ENCODE measurements at regions of chr9 and their contacts with region 1.

Region 1: DNA sequence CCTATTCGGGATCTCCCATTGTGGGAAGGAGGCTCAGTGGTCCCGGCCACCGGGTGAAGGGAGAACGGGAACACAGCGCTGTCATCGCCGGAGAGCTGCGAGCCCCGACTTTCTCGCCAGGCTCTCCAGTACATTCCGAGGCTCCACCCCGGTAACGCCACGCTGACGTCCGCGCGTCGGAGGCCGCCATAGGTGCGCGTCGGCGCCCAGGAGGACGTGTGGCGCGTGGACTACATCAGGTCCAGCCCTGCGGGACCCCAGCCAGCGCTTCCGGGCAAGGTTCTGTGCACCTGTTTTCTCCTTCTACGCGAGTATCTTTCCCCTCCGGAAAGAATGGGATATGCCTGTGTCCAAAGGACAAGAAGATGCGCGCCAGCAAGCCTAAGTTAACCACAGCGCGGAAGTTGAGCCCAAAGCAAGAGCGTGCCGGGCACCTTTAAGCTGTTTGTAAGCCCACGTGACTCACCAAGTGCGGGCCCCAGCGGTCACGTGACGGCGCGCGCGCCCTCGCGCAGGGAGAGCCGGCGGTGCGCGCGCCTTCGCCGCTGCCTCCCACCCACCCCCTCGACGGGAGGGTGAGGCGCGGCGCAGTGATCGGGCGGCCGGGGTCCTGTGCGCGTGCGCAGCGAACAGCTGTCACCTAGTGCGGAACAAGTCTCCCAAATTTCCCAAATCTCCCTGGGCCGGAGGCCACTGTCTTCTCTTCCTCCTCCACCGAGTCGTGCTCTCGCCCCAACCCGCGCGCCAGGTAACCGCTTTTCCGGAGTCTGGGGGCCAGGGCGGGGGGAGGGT is at the start of gene KDM4C:
- DNase-seq: peak in 1 of 2 donors; percentile 96
- H3K4me3 ChIP-seq: peak within 1 kb of the TSS; percentile 61 to 100
- H3K27ac ChIP-seq: peak within 1 kb of the TSS; percentile 99
- H3K4me1 ChIP-seq: peaks cover 15% of the 10 kb centered on the region
- H3K27me3 ChIP-seq: no peaks in the 10 kb centered on the region
- CTCF ChIP-seq: no peak
- POLR2A ChIP-seq: peak in 1 of 2 donors; percentile 71
- total RNA-seq, gene KDM4C: 35.6 TPM

Region 2: GRCh38 chr9:6412487-6413364 is 344.9 kb before region 1 on chr9 and contains the start of gene UHRF2:
- intact Hi-C with region 1: loop called (anchors 5 kb)
- DNase-seq: peak; percentile 96 to 98
- H3K4me3 ChIP-seq: peak within 1 kb of the TSS; percentile 83 to 88
- H3K27ac ChIP-seq: peak within 1 kb of the TSS; percentile 92
- H3K4me1 ChIP-seq: peaks cover 27% of the 10 kb centered on the region
- H3K27me3 ChIP-seq: no peaks in the 10 kb centered on the region
- CTCF ChIP-seq: peak in 1 of 3 experiments; percentile 35
- POLR2A ChIP-seq: peak in 1 of 2 donors; percentile 77
- total RNA-seq, gene UHRF2: 70.0 TPM

Region 3: GRCh38 chr9:6681147-6681956 is 76.3 kb before region 1 on chr9:
- intact Hi-C with region 1: loop called (anchors 5 kb)
- DNase-seq: peak in 1 of 2 donors; percentile 97
- H3K4me3 ChIP-seq: peak overlapping the region; percentile 69 to 76
- H3K27ac ChIP-seq: peak overlapping the region; percentile 92
- H3K4me1 ChIP-seq: peaks cover 15% of the 10 kb centered on the region
- H3K27me3 ChIP-seq: no peaks in the 10 kb centered on the region
- CTCF ChIP-seq: peak in 1 of 3 experiments; percentile 11
- POLR2A ChIP-seq: peak in 1 of 2 donors; percentile 35